PC-3 (cell line): ENCODE measurements at regions of chr11 and their contacts with region 1.

Region 1: GRCh38 chr11:111718436-111718835 is 47.8 kb downstream of the PPP2R1B start:
- DNase-seq: peak; percentile 98
- ATAC-seq: peak; percentile 96
- H3K4me3 ChIP-seq: peak overlapping the region; percentile 20
- H3K27ac ChIP-seq: peak overlapping the region; percentile 81
- H3K4me1 ChIP-seq: peaks cover 21% of the 10 kb centered on the region
- H3K27me3 ChIP-seq: no peaks in the 10 kb centered on the region
- CTCF ChIP-seq: no peak; the same call in 1 of the 2 replicates

Region 2: DNA sequence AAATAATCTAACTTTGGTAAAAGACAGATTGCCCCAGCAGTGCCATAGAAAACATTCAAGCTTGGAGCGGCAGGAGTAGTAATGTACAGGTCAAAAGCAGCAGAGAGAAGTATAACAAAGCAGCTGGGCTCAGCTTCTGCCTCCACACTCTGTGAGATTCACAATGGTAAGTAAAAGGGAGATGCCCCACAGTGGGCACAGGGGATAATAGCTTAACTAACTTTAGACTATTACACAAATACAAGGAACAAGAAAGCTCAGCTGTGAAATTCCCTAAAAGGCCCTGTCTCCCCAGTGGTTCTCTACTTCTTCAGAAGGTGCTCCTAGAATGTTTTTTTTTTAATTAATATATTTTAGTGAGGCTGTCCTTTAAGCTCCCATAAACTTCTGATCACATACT is 1450.0 kb before region 1 on chr11:
- CTCF ChIA-PET with region 1: no interaction called
- POLR2A ChIA-PET with region 1: no interaction called
- intact Hi-C with region 1: no loop called
- DNase-seq: no peak
- ATAC-seq: no peak
- H3K4me3 ChIP-seq: no peak overlapping the region
- H3K27ac ChIP-seq: no peak overlapping the region
- H3K4me1 ChIP-seq: no peaks in the 10 kb centered on the region
- H3K27me3 ChIP-seq: no peaks in the 10 kb centered on the region
- CTCF ChIP-seq: no peak

Region 3: DNA sequence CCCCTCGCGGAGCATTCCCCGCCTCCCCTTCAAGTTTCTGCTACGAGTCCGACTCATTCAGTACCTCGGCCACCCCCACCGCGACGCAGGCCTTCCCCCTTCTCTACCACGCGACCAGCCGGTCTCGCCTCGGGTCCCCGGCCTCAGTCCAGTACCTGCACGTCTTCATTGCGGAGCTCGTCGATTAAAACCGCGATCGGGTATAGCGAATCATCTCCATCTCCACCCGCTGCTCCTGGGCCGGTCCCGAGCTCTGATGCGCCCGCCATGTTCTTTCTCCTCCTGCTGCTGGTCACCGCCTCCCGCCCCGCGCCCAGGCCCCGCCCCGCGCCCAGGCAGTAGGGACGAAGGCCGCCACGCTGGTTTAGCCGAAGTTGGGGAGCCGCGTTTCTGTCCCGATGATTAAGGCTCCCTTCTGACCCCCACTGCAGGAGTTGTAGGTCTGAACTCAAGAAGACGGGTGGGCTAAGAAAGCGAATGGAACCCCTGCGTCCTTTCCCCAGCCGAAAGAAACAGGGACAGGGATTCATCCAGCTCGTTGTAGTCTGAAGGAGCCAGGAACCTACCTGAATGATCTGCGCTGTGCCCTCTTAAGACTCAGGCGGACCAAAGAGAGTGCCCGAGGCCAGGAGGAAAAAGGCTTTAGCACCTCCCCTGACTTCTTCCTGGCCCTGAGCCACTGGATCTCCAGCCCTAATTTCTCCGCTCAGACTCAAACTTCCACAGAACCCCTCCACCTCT is 47.8 kb after region 1 on chr11 and contains the start of gene PPP2R1B:
- CTCF ChIA-PET with region 1: interaction called, 3 read pairs
- POLR2A ChIA-PET with region 1: interaction called, 5 read pairs
- intact Hi-C with region 1: loop called (anchors 1 kb)
- DNase-seq: peak; percentile 83
- ATAC-seq: peak; percentile 82
- H3K4me3 ChIP-seq: peak within 1 kb of the TSS; percentile 74
- H3K27ac ChIP-seq: peak within 1 kb of the TSS; percentile 74
- H3K4me1 ChIP-seq: peaks cover 25% of the 10 kb centered on the region
- H3K27me3 ChIP-seq: no peaks in the 10 kb centered on the region
- CTCF ChIP-seq: no peak
- total RNA-seq, gene PPP2R1B: 31.3 and 41.5 TPM in 2 replicates